Ascending aorta (tissue), 2 donors: ENCODE measurements at regions of chr1 and their contacts with region 1.

Region 1: DNA sequence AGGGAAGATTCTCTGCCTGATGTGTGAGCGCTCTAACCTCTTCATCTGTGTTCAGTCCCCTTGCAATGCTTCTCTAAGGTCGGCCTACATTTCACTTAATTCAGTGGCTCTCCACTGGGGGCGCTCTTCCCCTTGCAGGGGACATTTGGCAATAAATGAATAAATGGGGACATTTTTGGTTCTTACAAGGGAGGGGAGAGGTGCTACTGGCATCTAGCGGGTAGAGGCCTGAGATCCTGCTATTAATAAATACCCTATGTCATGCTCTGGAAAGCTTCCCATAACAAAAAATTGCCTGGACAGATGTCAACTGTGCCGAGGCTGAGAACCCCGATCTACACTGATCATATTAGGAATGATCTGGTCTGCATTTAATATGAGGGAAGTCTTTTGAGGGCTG is 25.9 kb upstream of the DNAJC11 start:
- DNase-seq: peak in 1 of 2 donors; percentile 84
- H3K4me3 ChIP-seq: no peak overlapping the region
- H3K27ac ChIP-seq: peak overlapping the region in 1 of 2 donors; percentile 19
- H3K4me1 ChIP-seq: peaks cover 0 to 2% of the 10 kb centered on the region in 2 donors
- H3K27me3 ChIP-seq: no peaks in the 10 kb centered on the region
- CTCF ChIP-seq: peak; percentile 73 to 92 (median 90)

Region 2: DNA sequence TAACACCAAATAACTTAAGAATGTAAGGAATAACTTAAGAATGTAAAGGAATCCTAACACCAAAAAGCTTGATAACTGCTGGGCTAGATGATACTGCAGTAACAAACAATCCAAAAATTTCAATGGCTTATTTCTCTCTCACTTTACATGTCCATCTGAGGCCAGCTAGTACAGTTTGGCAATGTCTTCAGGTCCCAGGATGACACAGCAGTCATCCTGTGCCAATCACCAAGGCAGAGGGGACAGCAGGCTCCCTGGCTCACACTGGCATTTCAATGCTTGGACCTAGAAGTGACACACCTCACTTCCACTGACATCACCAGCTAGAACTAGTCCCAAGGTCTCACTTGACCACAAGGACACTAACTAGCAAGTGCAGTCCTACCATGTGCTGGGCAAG is 41.2 kb before region 1 on chr1:
- intact Hi-C with region 1: no loop called
- DNase-seq: no peak
- H3K4me3 ChIP-seq: no peak overlapping the region
- H3K27ac ChIP-seq: no peak overlapping the region
- H3K4me1 ChIP-seq: no peaks in the 10 kb centered on the region
- H3K27me3 ChIP-seq: no peaks in the 10 kb centered on the region
- CTCF ChIP-seq: no peak

Region 3: DNA sequence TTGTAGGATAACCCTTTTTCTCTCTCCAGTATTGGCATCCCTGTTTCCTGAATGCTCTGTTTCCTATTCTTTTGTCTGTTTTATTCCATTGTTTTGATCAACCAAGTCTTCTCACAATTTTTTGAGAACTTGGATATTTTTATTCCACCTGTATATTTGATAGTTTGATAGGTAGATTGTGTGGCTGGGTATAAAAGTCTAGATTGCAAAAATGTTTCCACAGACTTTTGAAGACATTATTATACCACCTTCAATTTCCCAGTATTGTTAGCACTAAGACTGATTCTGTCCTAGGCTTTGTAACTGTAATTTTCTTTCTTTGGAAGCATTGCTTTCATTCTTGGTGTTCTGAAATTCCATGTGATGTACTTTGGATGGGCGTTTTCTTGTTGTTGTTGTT is 16.4 kb before region 1 on chr1:
- intact Hi-C with region 1: no loop called
- DNase-seq: no peak
- H3K4me3 ChIP-seq: no peak overlapping the region
- H3K27ac ChIP-seq: no peak overlapping the region
- H3K4me1 ChIP-seq: no peaks in the 10 kb centered on the region
- H3K27me3 ChIP-seq: no peaks in the 10 kb centered on the region
- CTCF ChIP-seq: no peak

Region 4: GRCh38 chr1:6889875-6890480 is 162.4 kb after region 1 on chr1:
- intact Hi-C with region 1: loop called (anchors 5 kb)
- DNase-seq: peak in 1 of 2 donors; percentile 78
- H3K4me3 ChIP-seq: no peak overlapping the region
- H3K27ac ChIP-seq: no peak overlapping the region
- H3K4me1 ChIP-seq: peaks cover 0 to 3% of the 10 kb centered on the region in 2 donors
- H3K27me3 ChIP-seq: no peaks in the 10 kb centered on the region
- CTCF ChIP-seq: peak; percentile 64 to 82 (median 70)

Region 5: GRCh38 chr1:7218210-7218832 is 490.8 kb after region 1 on chr1:
- intact Hi-C with region 1: loop called (anchors 5 kb)
- DNase-seq: no peak
- H3K4me3 ChIP-seq: no peak overlapping the region
- H3K27ac ChIP-seq: no peak overlapping the region
- H3K4me1 ChIP-seq: no peaks in the 10 kb centered on the region
- H3K27me3 ChIP-seq: no peaks in the 10 kb centered on the region
- CTCF ChIP-seq: peak; percentile 4 to 56 (median 23)